ENCODE measurements at regions of chr12 and their contacts with region 1.

Region 1: DNA sequence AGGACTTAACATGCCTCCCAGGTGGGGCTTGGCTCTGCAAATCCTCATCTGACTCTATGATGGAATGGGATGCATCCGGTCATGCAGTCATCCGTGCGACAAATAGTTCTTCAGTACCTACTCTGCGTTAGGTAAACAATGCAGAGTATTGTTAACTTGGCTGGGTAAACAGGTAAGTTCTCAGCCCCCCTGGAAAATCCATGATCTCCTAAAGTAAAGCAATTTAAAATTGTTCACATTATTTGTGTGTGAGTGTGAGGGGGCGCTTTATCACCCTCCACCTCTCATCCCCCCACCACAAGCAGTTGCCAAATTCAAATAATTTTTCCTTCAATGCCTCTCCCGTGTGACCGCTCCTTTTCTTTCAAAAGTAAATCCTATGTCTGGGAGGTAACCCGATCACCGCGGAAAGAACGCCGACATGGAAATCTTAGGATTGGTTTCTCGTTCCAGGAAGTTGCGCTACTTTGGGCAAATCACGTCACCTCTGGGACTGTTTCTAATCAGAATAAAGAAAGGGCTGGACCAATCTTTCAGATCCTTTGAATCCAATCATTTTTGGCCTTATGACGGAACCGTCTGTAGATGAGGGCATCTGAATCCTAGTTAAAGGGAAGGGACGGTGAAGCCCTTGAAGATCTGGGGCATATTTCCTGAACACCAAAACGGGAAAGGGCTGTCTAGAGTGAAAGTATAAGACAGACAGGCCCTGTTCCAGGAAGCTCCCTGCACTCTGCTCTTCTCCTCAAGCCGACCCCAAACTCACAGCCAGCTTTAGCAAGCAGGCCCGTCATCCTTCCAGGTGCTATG is 44.0 kb upstream of the SINHCAF start:
- DNase-seq: peak; percentile 60
- H3K4me3 ChIP-seq: no peak overlapping the region
- H3K27ac ChIP-seq: no peak overlapping the region
- H3K4me1 ChIP-seq: peaks cover 17% of the 10 kb centered on the region
- H3K27me3 ChIP-seq: no peaks in the 10 kb centered on the region
- CTCF ChIP-seq: no peak
- POLR2A ChIP-seq: no peak

Region 2: GRCh38 chr12:31325877-31326631 is 43.9 kb before region 1 on chr12 and contains the start of gene SINHCAF:
- CTCF ChIA-PET with region 1: no interaction called
- POLR2A ChIA-PET with region 1: no interaction called
- dilution Hi-C with region 1: no loop called
- intact Hi-C with region 1: loop called (anchors 2 kb)
- DNase-seq: peak; percentile 99
- H3K4me3 ChIP-seq: peak within 1 kb of the TSS; percentile 53 to 98 (median 97)
- H3K27ac ChIP-seq: peak within 1 kb of the TSS; percentile 88
- H3K4me1 ChIP-seq: peaks cover 25% of the 10 kb centered on the region
- H3K27me3 ChIP-seq: peaks cover 0 to 12% of the 10 kb centered on the region in 2 experiments
- CTCF ChIP-seq: no peak
- POLR2A ChIP-seq: peak; percentile 97
- total RNA-seq, gene SINHCAF: 73.5 and 83.4 TPM in 2 replicates

Region 3: GRCh38 chr12:31536672-31537071 is 166.8 kb after region 1 on chr12:
- CTCF ChIA-PET with region 1: no interaction called
- POLR2A ChIA-PET with region 1: no interaction called
- dilution Hi-C with region 1: no loop called
- intact Hi-C with region 1: no loop called
- DNase-seq: no peak
- H3K4me3 ChIP-seq: no peak overlapping the region
- H3K27ac ChIP-seq: no peak overlapping the region
- H3K4me1 ChIP-seq: peaks cover 3% of the 10 kb centered on the region
- H3K27me3 ChIP-seq: no peaks in the 10 kb centered on the region
- CTCF ChIP-seq: no peak
- POLR2A ChIP-seq: no peak